Posterior vena cava (tissue), 2 donors: ENCODE measurements at regions of chr20 and their contacts with region 1.

Region 1: GRCh38 chr20:60100780-60101179 is 142.6 kb downstream of the CDH26 start:
- DNase-seq: no peak

Region 2: GRCh38 chr20:59664421-59664941 is 436.3 kb before region 1 on chr20:
- intact Hi-C with region 1: no loop called
- DNase-seq: no peak

Region 3: DNA sequence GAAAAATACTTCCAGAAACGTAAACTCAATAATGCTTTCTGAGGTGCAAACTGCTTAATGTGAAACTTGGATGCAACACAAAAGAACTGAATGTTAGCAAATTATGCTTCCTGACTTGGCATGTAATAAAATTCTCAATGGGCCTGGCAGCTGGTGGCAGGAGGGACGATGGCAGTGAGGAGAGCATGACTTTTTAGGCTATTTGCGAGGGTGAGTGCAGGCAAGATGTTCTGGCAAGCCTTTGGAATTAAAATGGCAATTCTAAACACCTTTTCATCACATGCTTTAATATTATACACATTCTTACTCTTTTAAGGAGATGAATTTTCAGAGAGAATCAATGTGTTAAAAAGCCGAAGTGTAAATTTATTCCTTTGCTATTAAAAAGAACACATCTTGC is 926.4 kb after region 1 on chr20:
- intact Hi-C with region 1: loop called in 1 of 2 experiments (anchors 5 kb)
- DNase-seq: no peak